WTC11 (cell line): ENCODE measurements at regions of chr7 and their contacts with region 1.

Region 1: DNA sequence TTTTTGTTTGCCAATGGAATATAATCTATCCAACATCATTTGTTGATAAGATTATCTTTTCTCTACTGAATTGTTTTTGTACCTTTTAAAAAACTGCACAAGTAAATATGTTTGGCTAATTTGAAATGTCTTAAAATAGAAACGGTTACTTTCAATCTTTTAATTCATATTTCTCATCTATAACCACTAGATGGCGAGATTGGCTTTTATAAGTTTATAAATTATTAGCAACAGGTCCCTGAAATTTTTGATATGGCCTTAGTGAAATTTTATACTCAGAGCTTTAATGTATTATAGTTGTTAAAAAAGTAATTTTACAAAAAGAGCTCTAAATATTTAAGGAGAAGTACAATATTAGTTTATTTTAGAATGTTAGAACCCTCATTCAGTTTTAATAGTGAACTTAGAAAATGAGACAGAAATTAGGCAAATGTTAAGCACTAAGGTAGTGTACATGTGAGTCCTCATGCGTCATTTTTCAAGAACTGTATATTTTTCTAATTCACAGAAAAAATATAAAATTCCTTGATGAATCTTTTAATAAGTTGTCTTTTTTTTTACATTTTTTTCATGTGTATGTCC is 592.5 kb downstream of the ARL4A start:
- DNase-seq: no peak
- ATAC-seq: no peak
- H3K4me3 Mint-ChIP-seq: no peak overlapping the region
- H3K27ac Mint-ChIP-seq: no peak overlapping the region
- H3K4me1 Mint-ChIP-seq: no peaks in the 10 kb centered on the region
- H3K27me3 Mint-ChIP-seq: no peaks in the 10 kb centered on the region
- CTCF ChIP-seq: peak; percentile 34; the same call in 1 of the 2 replicates

Region 2: GRCh38 chr7:13359656-13360055 is 79.7 kb after region 1 on chr7:
- CTCF ChIA-PET with region 1: interaction called, 10 read pairs
- POLR2A ChIA-PET with region 1: no interaction called
- DNase-seq: peak; percentile 15
- ATAC-seq: peak; percentile 74
- H3K4me3 Mint-ChIP-seq: no peak overlapping the region
- H3K27ac Mint-ChIP-seq: no peak overlapping the region
- H3K4me1 Mint-ChIP-seq: peaks cover 6% of the 10 kb centered on the region
- H3K27me3 Mint-ChIP-seq: no peaks in the 10 kb centered on the region
- CTCF ChIP-seq: no peak

Region 3: GRCh38 chr7:14691597-14692203 is 1411.8 kb after region 1 on chr7:
- CTCF ChIA-PET with region 1: interaction called, 24 read pairs
- POLR2A ChIA-PET with region 1: no interaction called
- DNase-seq: peak; percentile 73
- ATAC-seq: peak; percentile 74
- H3K4me3 Mint-ChIP-seq: no peak overlapping the region
- H3K27ac Mint-ChIP-seq: no peak overlapping the region
- H3K4me1 Mint-ChIP-seq: peaks cover 18% of the 10 kb centered on the region
- H3K27me3 Mint-ChIP-seq: no peaks in the 10 kb centered on the region
- CTCF ChIP-seq: peak; percentile 80